K562 (cell line): ENCODE measurements at regions of chr11 and their contacts with region 1.

Region 1: DNA sequence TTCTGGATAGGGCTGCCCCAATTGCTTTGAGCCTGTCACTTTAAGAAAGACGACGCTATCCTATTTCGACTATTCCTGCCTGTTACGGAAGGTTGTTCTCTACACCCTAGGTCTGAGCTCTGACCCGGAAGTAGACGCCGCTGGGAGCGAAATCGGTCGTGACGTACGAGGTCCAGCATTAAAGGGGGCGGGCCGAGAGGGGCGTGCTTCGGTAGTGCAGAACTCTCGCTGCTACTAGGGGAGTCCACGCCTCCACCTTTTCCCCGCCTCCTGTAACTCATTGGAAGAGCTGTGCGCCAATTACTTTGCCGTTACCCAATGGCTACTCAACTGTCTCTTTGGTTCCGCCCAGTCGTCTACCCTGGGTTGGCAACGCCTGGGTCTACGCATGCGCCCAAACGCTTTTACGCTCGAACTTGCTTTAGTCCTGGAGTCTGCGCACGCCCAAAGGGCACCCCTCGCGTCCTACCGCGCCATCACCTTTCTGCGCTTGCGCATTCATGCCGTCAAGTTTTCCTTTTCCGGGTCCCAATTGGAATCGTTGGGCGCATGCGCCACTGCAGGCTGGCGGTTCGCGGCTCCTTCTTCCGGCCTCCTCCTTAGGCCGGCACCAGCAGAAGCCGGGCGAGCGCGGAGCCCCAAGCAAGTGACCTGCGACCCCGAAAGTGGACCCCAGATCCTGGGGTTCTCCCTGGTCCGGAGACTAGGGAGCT is at the start of gene PCNX3:
- DNase-seq: peak; percentile 97 to 100 (median 99)
- ATAC-seq: peak; percentile 91
- H3K4me3 ChIP-seq: peak within 1 kb of the TSS; percentile 94
- H3K27ac ChIP-seq: peak within 1 kb of the TSS; percentile 74
- H3K4me1 ChIP-seq: peaks cover 28 to 78% of the 10 kb centered on the region in 2 experiments
- H3K27me3 ChIP-seq: no peaks in the 10 kb centered on the region
- CTCF ChIP-seq: no peak
- EP300 ChIP-seq: peak; percentile 37; the same call in 1 of the 2 replicates
- POLR2A ChIP-seq: peak; percentile 84
- RAD21 ChIP-seq: no peak
- polyA plus RNA-seq, gene PCNX3: 0.11 to 0.29 TPM

Region 2: GRCh38 chr11:65575568-65576231 is 39.7 kb before region 1 on chr11 and contains the start of gene EHBP1L1:
- CTCF ChIA-PET with region 1: no interaction called
- POLR2A ChIA-PET with region 1: interaction called, 3 read pairs
- in situ Hi-C with region 1: no loop called
- intact Hi-C with region 1: loop called (anchors 1 kb)
- DNase-seq: peak; percentile 81 to 93 (median 91)
- ATAC-seq: peak; percentile 45
- H3K4me3 ChIP-seq: peak within 1 kb of the TSS; percentile 88
- H3K27ac ChIP-seq: peak within 1 kb of the TSS; percentile 89
- H3K4me1 ChIP-seq: peaks cover 57 to 93% of the 10 kb centered on the region in 2 experiments
- H3K27me3 ChIP-seq: no peaks in the 10 kb centered on the region; a peak in 1 of 5 replicates
- CTCF ChIP-seq: no peak
- EP300 ChIP-seq: no peak
- POLR2A ChIP-seq: peak; percentile 61
- RAD21 ChIP-seq: no peak
- polyA plus RNA-seq, gene EHBP1L1: 0.03 to 0.38 TPM

Region 3: GRCh38 chr11:65593518-65594298 is 21.7 kb before region 1 on chr11:
- CTCF ChIA-PET with region 1: no interaction called
- POLR2A ChIA-PET with region 1: interaction called, 17 read pairs
- in situ Hi-C with region 1: no loop called
- intact Hi-C with region 1: no loop called
- DNase-seq: peak; percentile 46 to 67 (median 56)
- ATAC-seq: peak; percentile 80
- H3K4me3 ChIP-seq: no peak overlapping the region
- H3K27ac ChIP-seq: no peak overlapping the region
- H3K4me1 ChIP-seq: peaks cover 8 to 59% of the 10 kb centered on the region in 2 experiments; a peak in 4 of 5 replicates
- H3K27me3 ChIP-seq: no peaks in the 10 kb centered on the region
- CTCF ChIP-seq: peak; percentile 67 to 83 (median 71)
- EP300 ChIP-seq: no peak
- POLR2A ChIP-seq: 0 out of 2 replicates have a peak, but pooled peaks have one; percentile 32
- RAD21 ChIP-seq: peak; percentile 29 to 54; a peak in 3 of 4 replicates

Region 4: DNA sequence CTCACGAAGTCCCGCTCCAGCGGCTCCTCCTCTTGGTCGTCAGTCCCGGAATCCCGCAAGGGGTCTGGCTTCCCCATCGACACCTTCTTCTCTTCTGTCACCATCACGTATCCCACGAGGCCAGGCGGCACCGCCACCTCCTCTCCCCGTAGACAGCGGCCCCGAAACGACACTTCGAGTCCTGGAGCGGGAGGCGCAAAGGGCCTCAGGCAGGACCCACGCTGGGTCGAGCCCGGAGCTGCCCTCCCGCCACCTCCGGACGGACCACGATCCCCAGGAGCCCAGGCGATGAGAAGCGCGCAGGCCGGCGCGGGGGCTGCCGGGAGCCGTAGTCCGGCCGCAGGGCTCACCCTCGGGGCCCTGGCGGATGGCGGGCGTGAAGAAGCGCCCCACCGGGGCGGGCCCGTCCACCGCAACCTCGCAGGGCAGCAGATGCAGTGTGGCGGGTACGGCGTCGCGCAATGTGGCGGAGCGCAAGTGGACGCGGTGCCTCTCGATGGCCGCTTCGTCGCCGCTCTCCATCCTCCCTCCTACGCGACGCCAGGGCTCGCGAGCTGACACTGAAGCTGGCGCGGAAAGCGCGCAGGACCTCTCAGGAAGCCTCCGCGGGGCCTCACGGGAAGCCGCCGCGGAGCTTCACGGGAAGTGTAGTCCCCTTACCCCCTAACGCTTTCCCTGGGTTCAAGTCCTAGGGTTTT is 105.0 kb after region 1 on chr11 and contains the start of gene RNASEH2C:
- CTCF ChIA-PET with region 1: no interaction called
- POLR2A ChIA-PET with region 1: no interaction called
- in situ Hi-C with region 1: no loop called
- intact Hi-C with region 1: no loop called
- DNase-seq: peak; percentile 86 to 95 (median 88)
- ATAC-seq: peak; percentile 94
- H3K4me3 ChIP-seq: peak within 1 kb of the TSS; percentile 64
- H3K27ac ChIP-seq: peak within 1 kb of the TSS; percentile 65
- H3K4me1 ChIP-seq: peaks cover 12 to 22% of the 10 kb centered on the region in 2 experiments; a peak in 4 of 5 replicates
- H3K27me3 ChIP-seq: no peaks in the 10 kb centered on the region
- CTCF ChIP-seq: no peak
- EP300 ChIP-seq: no peak
- POLR2A ChIP-seq: peak; percentile 88
- RAD21 ChIP-seq: no peak
- polyA plus RNA-seq, gene RNASEH2C: 5.4 to 9.4 TPM